Panc1 (cell line): ENCODE measurements at regions of chr11 and their contacts with region 1.

Region 1: GRCh38 chr11:64742889-64743590 is 902 bp downstream of the RASGRP2 start:
- DNase-seq: no peak
- ATAC-seq: peak; percentile 73
- H3K4me3 ChIP-seq: peak overlapping the region; percentile 43 to 61
- H3K27ac ChIP-seq: peak overlapping the region; percentile 68; the same call in 1 of the 2 replicates
- H3K4me1 ChIP-seq: peaks cover 13% of the 10 kb centered on the region
- H3K27me3 ChIP-seq: no peaks in the 10 kb centered on the region
- CTCF ChIP-seq: peak; percentile 91

Region 2: GRCh38 chr11:64415996-64416728 is 326.9 kb before region 1 on chr11:
- CTCF ChIA-PET with region 1: no interaction called
- POLR2A ChIA-PET with region 1: interaction called, 10 read pairs
- in situ Hi-C with region 1: no loop called
- intact Hi-C with region 1: no loop called
- DNase-seq: no peak
- ATAC-seq: no peak
- H3K4me3 ChIP-seq: no peak overlapping the region
- H3K27ac ChIP-seq: no peak overlapping the region
- H3K4me1 ChIP-seq: no peaks in the 10 kb centered on the region
- H3K27me3 ChIP-seq: no peaks in the 10 kb centered on the region
- CTCF ChIP-seq: no peak